ENCODE measurements at regions of chr15 and their contacts with region 1.

Region 1: DNA sequence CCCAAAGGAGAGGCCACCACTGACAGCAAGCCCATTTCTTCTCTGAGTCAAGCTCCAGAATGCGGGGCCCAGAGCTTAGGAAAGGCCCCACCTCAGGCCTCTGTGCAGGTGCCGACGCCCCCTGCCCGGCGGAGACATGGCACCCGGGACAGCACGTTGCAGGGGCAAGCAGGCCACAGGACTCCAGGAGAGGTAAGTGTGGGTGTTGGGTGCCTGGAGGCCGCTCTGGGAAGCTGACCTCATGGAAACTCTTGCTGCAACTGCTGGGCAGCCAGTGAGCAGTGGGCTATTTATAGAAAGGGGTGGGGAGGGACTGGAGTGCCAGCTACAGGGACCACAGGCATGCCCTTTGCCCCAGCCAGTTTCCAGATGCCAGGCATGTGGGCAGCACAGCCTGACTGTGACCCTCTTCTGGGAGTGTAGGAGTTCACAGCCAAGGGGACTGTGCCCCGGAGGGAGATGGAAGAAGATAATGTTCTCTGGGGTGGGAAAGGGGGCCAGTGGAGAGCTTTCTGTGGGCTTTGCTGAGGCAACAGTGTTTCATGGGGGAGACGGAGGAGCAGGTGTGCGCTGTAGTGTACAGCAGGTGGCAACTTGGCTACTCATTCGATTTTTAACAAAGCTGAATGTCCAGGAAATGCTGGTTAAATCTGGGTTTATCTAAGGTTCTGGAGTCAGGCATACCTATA is 23.7 kb downstream of the ALPK3 start:
- DNase-seq: no peak
- H3K4me3 ChIP-seq: no peak overlapping the region
- H3K27ac ChIP-seq: no peak overlapping the region
- H3K4me1 ChIP-seq: no peaks in the 10 kb centered on the region
- CTCF ChIP-seq: no peak

Region 2: DNA sequence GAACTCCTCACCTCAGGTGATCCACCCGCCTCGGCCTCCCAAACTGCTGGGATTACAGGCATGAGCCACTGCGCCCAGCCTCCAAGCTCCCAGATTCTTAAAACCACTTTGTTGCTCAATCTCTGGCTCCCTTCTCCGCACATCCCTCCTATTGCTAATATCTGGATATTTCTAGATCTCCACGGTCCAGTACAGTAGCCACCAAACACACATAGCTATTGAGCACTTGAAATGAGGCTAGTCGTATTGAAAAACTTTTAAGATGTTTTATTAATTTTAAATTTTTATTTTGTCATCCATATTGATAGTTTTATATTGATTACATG is 87.9 kb after region 1 on chr15:
- CTCF ChIA-PET with region 1: interaction called, 3 read pairs
- POLR2A ChIA-PET with region 1: no interaction called
- intact Hi-C with region 1: loop called (anchors 1 kb)
- DNase-seq: no peak
- H3K4me3 ChIP-seq: no peak overlapping the region
- H3K27ac ChIP-seq: no peak overlapping the region
- H3K4me1 ChIP-seq: peaks cover 5% of the 10 kb centered on the region
- CTCF ChIP-seq: no peak

Region 3: DNA sequence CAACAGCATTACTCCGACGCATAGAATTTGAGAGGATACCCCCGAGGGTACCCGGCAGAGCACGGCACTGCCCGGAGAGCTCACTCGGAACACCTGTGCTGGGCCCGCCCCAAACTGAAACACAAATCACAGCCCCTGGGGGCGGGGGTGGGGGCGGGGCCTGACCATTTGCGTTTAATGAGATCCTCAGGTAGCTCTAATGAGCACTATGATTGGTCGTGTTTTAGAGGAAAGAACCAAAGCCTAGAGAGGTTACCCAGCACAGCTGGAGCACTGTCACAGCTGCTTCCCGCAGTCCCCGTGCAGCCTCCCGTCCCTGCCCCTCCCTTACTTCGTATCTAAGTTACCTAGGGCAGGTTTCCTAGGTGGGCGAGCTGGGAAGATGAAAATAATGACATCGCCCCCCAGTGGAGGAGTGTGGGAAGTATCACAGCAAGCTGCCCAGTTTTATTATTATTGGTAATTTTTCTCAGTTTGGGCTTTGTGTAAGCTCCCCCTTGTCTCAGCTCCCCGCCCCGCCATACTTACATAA is 327.8 kb after region 1 on chr15:
- CTCF ChIA-PET with region 1: no interaction called
- POLR2A ChIA-PET with region 1: no interaction called
- intact Hi-C with region 1: loop called (anchors 10 kb)
- DNase-seq: peak; percentile 47
- H3K4me3 ChIP-seq: no peak overlapping the region
- H3K27ac ChIP-seq: no peak overlapping the region
- H3K4me1 ChIP-seq: no peaks in the 10 kb centered on the region
- CTCF ChIP-seq: peak; percentile 79